ENCODE measurements at regions of chr9 and their contacts with region 1.

Region 1: GRCh38 chr9:122370869-122371755 is at the start of gene PTGS1:
- DNase-seq: peak; percentile 86
- H3K4me3 ChIP-seq: peak within 1 kb of the TSS; percentile 65 to 74 (median 68)
- H3K27ac ChIP-seq: peak within 1 kb of the TSS; percentile 90 to 95 (median 90)
- H3K4me1 ChIP-seq: peaks cover 0 to 64% (median 57%) of the 10 kb centered on the region in 4 donors
- H3K27me3 ChIP-seq: no peaks in the 10 kb centered on the region
- CTCF ChIP-seq: no peak
- EP300 ChIP-seq: no peak
- POLR2A ChIP-seq: peak; percentile 43 to 83
- total RNA-seq, gene PTGS1: 72.6 to 150 (median 121) TPM

Region 2: DNA sequence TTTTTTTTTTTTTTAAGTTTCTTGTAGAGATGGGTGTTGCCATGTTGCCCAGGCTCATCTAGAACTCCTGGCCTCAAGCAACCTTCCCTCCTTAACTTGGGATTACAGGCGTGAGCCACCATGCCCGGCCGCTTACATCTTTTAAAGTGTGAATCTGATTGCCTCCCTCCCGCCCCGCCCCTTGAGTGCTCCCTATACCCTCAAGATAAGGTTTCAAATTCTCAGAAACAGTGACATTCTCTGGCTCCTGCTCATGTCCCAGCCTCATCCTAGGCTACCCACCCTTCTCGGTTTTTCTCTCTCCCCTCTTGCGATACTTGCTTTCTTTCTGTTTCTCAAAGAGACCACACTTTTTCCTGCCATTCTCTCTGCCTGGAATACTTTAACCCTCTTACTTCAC is 199.0 kb before region 1 on chr9:
- intact Hi-C with region 1: no loop called
- DNase-seq: no peak
- H3K4me3 ChIP-seq: no peak overlapping the region
- H3K27ac ChIP-seq: no peak overlapping the region
- H3K4me1 ChIP-seq: peaks cover 0 to 3% (median 0%) of the 10 kb centered on the region in 4 donors
- H3K27me3 ChIP-seq: no peaks in the 10 kb centered on the region
- CTCF ChIP-seq: no peak
- EP300 ChIP-seq: no peak
- POLR2A ChIP-seq: no peak

Region 3: DNA sequence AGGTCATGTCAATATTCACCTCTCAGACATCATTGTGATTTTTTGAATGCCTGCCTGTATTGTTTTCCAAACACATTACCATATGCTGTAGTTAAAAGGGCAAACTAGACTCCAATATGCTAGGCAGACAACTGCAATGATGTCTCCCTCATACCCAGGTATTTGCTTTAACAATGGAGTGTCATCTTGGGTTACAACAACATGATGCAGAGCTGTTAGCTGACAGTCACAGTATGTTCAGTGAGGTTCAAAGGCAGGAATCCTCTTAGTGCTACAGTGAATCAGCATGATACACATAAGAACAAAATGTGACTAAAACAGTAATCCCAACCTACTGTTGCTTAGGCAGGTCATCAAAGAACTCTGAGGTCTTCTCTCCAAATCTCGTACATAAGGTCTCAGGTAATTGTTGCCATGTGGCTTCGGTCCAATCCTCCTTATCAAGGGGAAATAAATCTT is 82.6 kb after region 1 on chr9:
- intact Hi-C with region 1: loop called (anchors 5 kb)
- DNase-seq: no peak
- H3K4me3 ChIP-seq: no peak overlapping the region
- H3K27ac ChIP-seq: no peak overlapping the region
- H3K4me1 ChIP-seq: peaks cover 0 to 22% (median 7%) of the 10 kb centered on the region in 4 donors
- H3K27me3 ChIP-seq: no peaks in the 10 kb centered on the region
- CTCF ChIP-seq: no peak
- EP300 ChIP-seq: no peak
- POLR2A ChIP-seq: no peak

Region 4: DNA sequence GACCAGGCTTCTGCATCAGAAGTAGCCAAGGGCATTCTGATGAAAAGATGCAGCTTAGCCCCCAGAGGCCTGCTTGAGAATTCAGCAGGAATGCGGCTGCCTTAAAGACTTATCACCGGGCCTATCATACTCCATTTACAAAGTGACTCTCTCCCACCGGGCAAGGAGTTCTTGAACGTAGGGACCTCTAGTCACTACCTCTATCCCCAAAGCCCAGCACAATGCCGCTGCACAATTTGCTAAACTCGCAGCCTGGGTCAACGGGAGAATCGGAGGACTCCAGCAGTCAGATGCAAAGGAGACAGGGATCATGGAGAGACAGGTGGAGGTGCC is 456.6 kb after region 1 on chr9:
- intact Hi-C with region 1: loop called (anchors 10 kb)
- DNase-seq: no peak
- H3K4me3 ChIP-seq: peak overlapping the region; percentile 94 to 97 (median 94)
- H3K27ac ChIP-seq: peak overlapping the region; percentile 98 to 99 (median 98)
- H3K4me1 ChIP-seq: peaks cover 0 to 32% (median 29%) of the 10 kb centered on the region in 4 donors
- H3K27me3 ChIP-seq: no peaks in the 10 kb centered on the region
- CTCF ChIP-seq: no peak
- EP300 ChIP-seq: no peak
- POLR2A ChIP-seq: no peak

Measured in sigmoid colon (tissue), 7 donors.